GM12878 (cell line): ENCODE measurements at regions of chr12 and their contacts with region 1.

Region 1: GRCh38 chr12:108514973-108515814 is at the start of gene FICD:
- DNase-seq: peak; percentile 97
- ATAC-seq: peak; percentile 88
- H3K4me3 ChIP-seq: peak within 1 kb of the TSS; percentile 97
- H3K27ac ChIP-seq: peak within 1 kb of the TSS; percentile 84
- H3K4me1 ChIP-seq: peaks cover 23% of the 10 kb centered on the region
- H3K27me3 ChIP-seq: no peaks in the 10 kb centered on the region
- CTCF ChIP-seq: 0 out of 6 replicates have a peak, but pooled peaks of 1 of the 3 experiments have one; percentile 0
- EP300 ChIP-seq: no peak
- POLR2A ChIP-seq: peak; percentile 82
- RAD21 ChIP-seq: no peak
- polyA plus RNA-seq, gene FICD: 3.2 to 3.3 TPM

Region 2: DNA sequence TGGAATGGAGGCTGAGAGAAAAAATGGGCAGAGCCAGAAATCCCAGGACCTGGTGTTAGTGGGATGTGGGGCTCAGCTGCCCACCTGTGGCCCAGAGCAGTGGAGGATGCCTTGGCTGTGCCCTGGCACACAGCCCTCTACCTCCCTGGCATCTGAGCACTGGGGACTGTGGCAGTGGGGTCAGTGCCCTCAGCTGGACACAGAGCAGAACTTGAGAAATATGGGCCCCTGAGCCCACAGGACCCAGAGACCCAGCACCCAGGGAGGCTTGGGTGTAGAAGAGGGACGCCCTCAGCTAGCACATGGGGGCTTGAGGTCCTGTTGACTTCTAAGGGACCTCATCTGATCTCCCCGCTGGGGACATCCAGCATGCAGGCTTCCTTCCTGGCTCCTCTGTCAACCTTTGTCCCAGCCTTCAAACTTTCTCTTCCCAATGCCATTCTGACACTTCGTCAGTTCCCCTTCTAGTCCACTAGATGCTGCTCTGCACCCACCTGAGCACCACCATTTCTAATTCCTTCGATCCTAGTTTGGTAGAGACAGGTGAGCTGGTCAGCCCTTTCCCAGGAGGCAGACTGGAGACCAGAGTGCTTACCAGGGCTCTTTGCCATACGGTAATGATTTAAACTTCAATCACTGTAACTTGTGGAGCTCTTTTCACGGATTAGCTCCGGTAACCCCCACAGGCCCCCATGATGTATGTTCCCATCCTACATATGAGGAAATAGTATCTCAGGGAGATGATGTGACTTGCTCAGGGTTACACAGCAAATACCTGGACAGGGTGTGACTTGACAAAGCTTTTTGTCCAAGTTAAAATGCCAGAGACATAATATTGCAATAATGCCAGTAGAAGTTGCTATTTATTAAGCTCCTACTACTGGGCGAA is 597.0 kb before region 1 on chr12:
- CTCF ChIA-PET with region 1: interaction called, 6 read pairs
- POLR2A ChIA-PET with region 1: no interaction called
- RAD21 ChIA-PET with region 1: interaction called, 3 read pairs
- SMC1A ChIA-PET with region 1: interaction called, 3 read pairs
- in situ Hi-C with region 1: no loop called
- intact Hi-C with region 1: loop called (anchors 5 kb)
- DNase-seq: no peak
- ATAC-seq: peak; percentile 85
- H3K4me3 ChIP-seq: no peak overlapping the region
- H3K27ac ChIP-seq: no peak overlapping the region
- H3K4me1 ChIP-seq: no peaks in the 10 kb centered on the region
- H3K27me3 ChIP-seq: no peaks in the 10 kb centered on the region; a peak in 1 of 4 replicates
- CTCF ChIP-seq: peak; percentile 82 to 87 (median 84)
- EP300 ChIP-seq: no peak
- POLR2A ChIP-seq: no peak
- RAD21 ChIP-seq: peak; percentile 90

Region 3: DNA sequence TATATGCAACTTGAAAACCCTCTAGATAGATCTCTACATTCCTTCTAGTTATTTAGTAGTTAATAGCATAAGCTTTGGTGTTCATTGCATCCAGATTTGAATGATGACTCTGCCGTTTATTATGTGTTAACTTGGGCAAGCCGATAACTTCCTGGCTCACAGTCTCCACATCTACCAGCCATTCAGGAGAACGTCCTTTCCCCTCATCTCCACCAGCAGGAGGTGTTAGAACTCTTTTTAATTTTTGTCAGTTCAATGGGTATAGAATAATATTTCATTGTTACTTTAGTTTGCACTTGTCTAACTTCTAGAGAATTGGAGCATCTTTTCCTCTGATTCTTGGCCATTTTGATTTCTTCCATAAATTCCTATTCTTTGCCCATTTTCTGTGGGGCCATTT is 416.1 kb before region 1 on chr12:
- CTCF ChIA-PET with region 1: no interaction called
- POLR2A ChIA-PET with region 1: interaction called, 3 read pairs
- RAD21 ChIA-PET with region 1: no interaction called
- SMC1A ChIA-PET with region 1: no interaction called
- in situ Hi-C with region 1: no loop called
- intact Hi-C with region 1: loop called (anchors 5 kb)
- DNase-seq: no peak
- ATAC-seq: peak; percentile 50; the same call in 2 of the 3 replicates
- H3K4me3 ChIP-seq: no peak overlapping the region
- H3K27ac ChIP-seq: no peak overlapping the region
- H3K4me1 ChIP-seq: no peaks in the 10 kb centered on the region; the same call in 1 of the 2 replicates
- H3K27me3 ChIP-seq: no peaks in the 10 kb centered on the region
- CTCF ChIP-seq: peak; percentile 32 to 37 (median 35); a peak in 4 of 6 replicates
- EP300 ChIP-seq: no peak
- POLR2A ChIP-seq: no peak
- RAD21 ChIP-seq: peak; percentile 59

Region 4: GRCh38 chr12:108320507-108321293 is 194.5 kb before region 1 on chr12:
- CTCF ChIA-PET with region 1: interaction called, 12 read pairs
- POLR2A ChIA-PET with region 1: no interaction called
- RAD21 ChIA-PET with region 1: no interaction called
- SMC1A ChIA-PET with region 1: interaction called, 4 read pairs
- in situ Hi-C with region 1: no loop called
- intact Hi-C with region 1: no loop called
- DNase-seq: peak; percentile 85
- ATAC-seq: peak; percentile 90
- H3K4me3 ChIP-seq: peak overlapping the region; percentile 69
- H3K27ac ChIP-seq: peak overlapping the region; percentile 89
- H3K4me1 ChIP-seq: peaks cover 50% of the 10 kb centered on the region
- H3K27me3 ChIP-seq: no peaks in the 10 kb centered on the region
- CTCF ChIP-seq: no peak
- EP300 ChIP-seq: no peak
- POLR2A ChIP-seq: 0 out of 2 replicates have a peak, but pooled peaks have one; percentile 26
- RAD21 ChIP-seq: no peak

Region 5: DNA sequence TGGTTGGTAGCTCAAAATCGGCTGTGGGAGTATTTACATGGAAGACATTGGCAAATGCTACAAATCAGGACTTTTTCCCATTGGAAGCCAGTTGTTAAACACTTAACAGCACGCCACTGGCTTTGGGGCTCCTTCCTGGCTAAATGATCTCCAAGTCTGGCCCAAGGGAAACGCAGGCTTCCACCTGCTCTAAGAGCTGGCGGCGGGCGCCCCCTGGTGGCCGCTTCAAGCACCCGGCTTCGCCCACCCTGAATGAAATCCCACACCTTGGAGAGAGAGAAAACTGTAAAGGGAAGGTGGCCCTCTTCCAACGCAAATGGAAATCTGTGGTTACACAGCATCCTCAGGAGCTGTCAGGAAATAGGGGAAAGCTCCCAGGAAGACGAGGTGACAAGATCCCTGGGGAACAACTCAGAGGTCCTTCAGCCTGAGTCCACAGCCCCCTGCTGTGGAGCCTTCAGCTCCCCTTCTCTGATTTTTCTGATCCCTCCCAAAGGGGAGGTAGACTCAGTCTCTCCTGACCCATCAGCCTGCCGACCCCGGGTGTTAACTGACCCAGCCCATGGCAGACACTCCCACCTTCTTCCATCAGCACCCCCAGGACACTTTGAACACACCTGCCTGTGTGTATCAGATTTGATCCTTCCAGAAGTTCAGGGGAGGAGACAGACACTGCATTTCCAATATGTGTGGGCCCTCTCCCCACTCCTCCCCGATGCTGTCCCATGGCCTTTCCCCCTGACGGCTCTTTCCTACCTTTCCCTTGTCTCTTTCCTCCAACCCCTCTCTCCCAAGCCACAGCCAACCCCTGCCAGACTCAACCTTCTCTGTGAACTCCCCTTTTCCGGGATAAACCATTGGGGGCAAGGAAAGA is 103.1 kb after region 1 on chr12:
- CTCF ChIA-PET with region 1: interaction called, 21 read pairs
- POLR2A ChIA-PET with region 1: interaction called, 6 read pairs
- RAD21 ChIA-PET with region 1: interaction called, 11 read pairs
- SMC1A ChIA-PET with region 1: interaction called, 26 read pairs
- in situ Hi-C with region 1: no loop called
- intact Hi-C with region 1: loop called (anchors 5 kb)
- DNase-seq: no peak
- ATAC-seq: peak; percentile 73
- H3K4me3 ChIP-seq: no peak overlapping the region
- H3K27ac ChIP-seq: peak overlapping the region; percentile 99
- H3K4me1 ChIP-seq: peaks cover 47% of the 10 kb centered on the region
- H3K27me3 ChIP-seq: no peaks in the 10 kb centered on the region
- CTCF ChIP-seq: peak; percentile 92 to 95 (median 94)
- EP300 ChIP-seq: no peak
- POLR2A ChIP-seq: no peak
- RAD21 ChIP-seq: peak; percentile 96